ENCODE measurements at regions of chr15 and their contacts with region 1.

Region 1: GRCh38 chr15:71443538-71443937 is 328.3 kb downstream of the THSD4 start:
- DNase-seq: peak; percentile 76
- H3K4me3 Mint-ChIP-seq: no peak overlapping the region
- H3K27ac Mint-ChIP-seq: no peak overlapping the region
- H3K4me1 Mint-ChIP-seq: peaks cover 3% of the 10 kb centered on the region
- H3K27me3 Mint-ChIP-seq: no peaks in the 10 kb centered on the region
- CTCF ChIP-seq: peak; percentile 89

Region 2: GRCh38 chr15:70974004-70974832 is 469.3 kb before region 1 on chr15:
- CTCF ChIA-PET with region 1: interaction called, 9 read pairs
- intact Hi-C with region 1: loop called (anchors 1 kb)
- DNase-seq: peak; percentile 3
- H3K4me3 Mint-ChIP-seq: no peak overlapping the region
- H3K27ac Mint-ChIP-seq: no peak overlapping the region
- H3K4me1 Mint-ChIP-seq: no peaks in the 10 kb centered on the region
- H3K27me3 Mint-ChIP-seq: no peaks in the 10 kb centered on the region
- CTCF ChIP-seq: peak; percentile 55

Region 3: DNA sequence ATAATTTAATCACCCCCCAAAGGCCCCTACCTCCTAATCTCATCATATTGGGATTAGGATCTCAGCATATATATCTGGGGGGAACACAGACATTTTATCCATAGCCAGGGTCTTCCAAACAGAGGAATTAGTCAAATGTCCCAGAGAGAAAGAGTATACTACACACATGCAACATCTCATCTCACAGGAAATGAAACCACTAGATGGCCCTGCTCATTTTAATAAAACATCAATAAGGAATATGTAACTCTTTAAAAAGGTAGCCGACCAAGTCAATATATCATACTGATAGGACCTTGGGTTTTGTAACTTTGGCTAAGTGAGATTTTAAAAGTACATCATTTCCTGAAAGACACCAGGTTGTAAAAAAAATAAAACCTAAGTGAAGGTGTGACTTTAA is 373.9 kb before region 1 on chr15:
- CTCF ChIA-PET with region 1: no interaction called
- intact Hi-C with region 1: loop called (anchors 1 kb)
- DNase-seq: no peak
- H3K4me3 Mint-ChIP-seq: no peak overlapping the region
- H3K27ac Mint-ChIP-seq: no peak overlapping the region
- H3K4me1 Mint-ChIP-seq: no peaks in the 10 kb centered on the region
- H3K27me3 Mint-ChIP-seq: no peaks in the 10 kb centered on the region
- CTCF ChIP-seq: no peak

Region 4: DNA sequence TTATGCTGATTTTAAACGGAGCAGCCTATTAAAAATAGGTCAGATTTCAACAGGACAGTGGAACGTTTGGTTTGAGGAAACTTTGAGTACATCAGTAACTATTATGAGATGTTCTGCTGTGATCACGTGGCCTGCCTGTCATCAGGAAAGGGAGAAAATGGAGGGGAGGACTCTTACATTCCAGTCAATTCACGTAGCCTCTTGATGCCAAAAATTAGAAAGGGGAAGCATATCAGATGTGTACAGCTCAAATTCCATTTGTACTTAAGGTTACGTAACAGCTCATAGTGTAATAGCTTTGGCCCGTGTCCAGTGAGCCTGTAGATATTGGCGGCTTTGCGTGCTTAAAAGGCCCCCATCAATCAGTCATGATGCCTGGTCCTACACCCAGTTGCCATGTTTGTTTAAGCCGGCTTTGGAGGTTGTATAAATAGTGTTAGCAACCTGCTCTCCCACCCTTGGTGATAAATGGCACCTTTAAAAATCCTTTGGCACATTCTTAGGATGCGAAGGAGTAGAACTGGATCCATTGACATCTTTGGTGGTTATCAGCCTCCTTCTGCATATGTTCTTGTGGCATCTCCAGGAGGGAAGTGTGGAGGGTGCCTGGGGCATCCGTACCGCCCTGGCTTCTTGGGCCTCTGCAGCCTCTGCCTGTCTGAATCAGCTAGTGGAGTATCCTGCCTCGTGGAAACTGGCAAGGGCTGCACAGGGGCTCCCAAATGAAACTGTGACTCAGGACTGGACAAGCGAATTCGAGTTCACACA is 164.4 kb before region 1 on chr15:
- CTCF ChIA-PET with region 1: no interaction called
- intact Hi-C with region 1: loop called (anchors 5 kb)
- DNase-seq: peak; percentile 87
- H3K4me3 Mint-ChIP-seq: peak overlapping the region; percentile 9
- H3K27ac Mint-ChIP-seq: peak overlapping the region; percentile 69
- H3K4me1 Mint-ChIP-seq: peaks cover 64% of the 10 kb centered on the region
- H3K27me3 Mint-ChIP-seq: no peaks in the 10 kb centered on the region
- CTCF ChIP-seq: no peak

Region 5: GRCh38 chr15:71386448-71387236 is 56.9 kb before region 1 on chr15:
- CTCF ChIA-PET with region 1: interaction called, 17 read pairs
- intact Hi-C with region 1: loop called (anchors 1 kb)
- DNase-seq: no peak
- H3K4me3 Mint-ChIP-seq: no peak overlapping the region
- H3K27ac Mint-ChIP-seq: no peak overlapping the region
- H3K4me1 Mint-ChIP-seq: no peaks in the 10 kb centered on the region
- H3K27me3 Mint-ChIP-seq: no peaks in the 10 kb centered on the region
- CTCF ChIP-seq: peak; percentile 36